ENCODE measurements at regions of chr9 and their contacts with region 1.

Region 1: GRCh38 chr9:133144137-133144903 is 19.4 kb downstream of the GBGT1 start:
- DNase-seq: no peak
- ATAC-seq: peak; percentile 29
- H3K4me3 ChIP-seq: peak overlapping the region; percentile 14 to 33
- H3K27ac ChIP-seq: peak overlapping the region; percentile 54; the same call in 1 of the 2 replicates
- H3K4me1 ChIP-seq: peaks cover 31% of the 10 kb centered on the region
- H3K27me3 ChIP-seq: no peaks in the 10 kb centered on the region
- CTCF ChIP-seq: peak; percentile 96

Region 2: GRCh38 chr9:133133681-133134418 is 10.5 kb before region 1 on chr9:
- CTCF ChIA-PET with region 1: interaction called, 20 read pairs
- POLR2A ChIA-PET with region 1: interaction called, 3 read pairs
- in situ Hi-C with region 1: no loop called
- intact Hi-C with region 1: no loop called
- DNase-seq: peak; percentile 72
- ATAC-seq: peak; percentile 89
- H3K4me3 ChIP-seq: peak overlapping the region in 1 of 2 experiments; percentile 13; a peak in 2 of 4 replicates
- H3K27ac ChIP-seq: peak overlapping the region; percentile 83
- H3K4me1 ChIP-seq: peaks cover 56% of the 10 kb centered on the region
- H3K27me3 ChIP-seq: no peaks in the 10 kb centered on the region
- CTCF ChIP-seq: no peak

Measured in Panc1 (cell line).